ENCODE measurements at regions of chr5 and their contacts with region 1.

Region 1: GRCh38 chr5:17189381-17190036 is 27.9 kb upstream of the BASP1 start:
- DNase-seq: peak; percentile 7 to 58 (median 40)
- ATAC-seq: no peak
- H3K4me3 ChIP-seq: no peak overlapping the region
- H3K4me3 Mint-ChIP-seq: no peak overlapping the region
- H3K27ac ChIP-seq: no peak overlapping the region
- H3K27ac Mint-ChIP-seq: no peak overlapping the region
- H3K4me1 ChIP-seq: no peaks in the 10 kb centered on the region
- H3K4me1 Mint-ChIP-seq: no peaks in the 10 kb centered on the region
- H3K27me3 ChIP-seq: no peaks in the 10 kb centered on the region
- H3K27me3 Mint-ChIP-seq: peaks cover 12% of the 10 kb centered on the region
- CTCF ChIP-seq: peak; percentile 71

Region 2: DNA sequence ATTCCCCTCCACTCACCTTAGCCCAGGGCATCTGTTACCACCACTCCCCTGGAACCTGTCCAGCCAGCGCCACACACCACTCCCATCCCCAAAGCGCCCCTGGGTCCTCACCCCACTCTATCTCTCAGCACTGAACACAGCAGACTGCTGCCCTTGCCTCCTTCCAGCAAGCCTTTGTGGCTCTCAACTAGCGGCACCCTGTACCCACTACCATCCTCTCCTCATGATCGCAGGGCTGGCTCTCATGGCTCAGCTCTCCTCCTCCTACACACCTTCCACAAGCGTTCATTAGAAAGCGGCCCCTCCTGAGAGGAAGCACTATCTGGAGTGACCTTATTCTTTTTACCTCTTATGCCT is 14.6 kb after region 1 on chr5:
- CTCF ChIA-PET with region 1: interaction called, 11 read pairs
- POLR2A ChIA-PET with region 1: no interaction called
- intact Hi-C with region 1: no loop called
- DNase-seq: no peak
- ATAC-seq: no peak
- H3K4me3 ChIP-seq: no peak overlapping the region
- H3K4me3 Mint-ChIP-seq: no peak overlapping the region
- H3K27ac ChIP-seq: no peak overlapping the region
- H3K27ac Mint-ChIP-seq: no peak overlapping the region
- H3K4me1 ChIP-seq: no peaks in the 10 kb centered on the region
- H3K4me1 Mint-ChIP-seq: no peaks in the 10 kb centered on the region
- H3K27me3 ChIP-seq: no peaks in the 10 kb centered on the region
- H3K27me3 Mint-ChIP-seq: peaks cover 9% of the 10 kb centered on the region
- CTCF ChIP-seq: no peak

Measured in CD8-positive, alpha-beta T cell (primary cell).